HepG2 (cell line): ENCODE measurements at regions of chr2 and their contacts with region 1.

Region 1: GRCh38 chr2:211157856-211158463 is 601.6 kb downstream of the CPS1 start:
- DNase-seq: peak; percentile 67
- ATAC-seq: peak; percentile 99
- H3K4me3 ChIP-seq: no peak overlapping the region
- H3K27ac ChIP-seq: no peak overlapping the region
- H3K4me1 ChIP-seq: no peaks in the 10 kb centered on the region
- H3K27me3 ChIP-seq: no peaks in the 10 kb centered on the region
- CTCF ChIP-seq: peak; percentile 83
- EP300 ChIP-seq: no peak
- POLR2A ChIP-seq: no peak
- RAD21 ChIP-seq: 0 out of 2 replicates have a peak, but pooled peaks have one; percentile 44

Region 2: DNA sequence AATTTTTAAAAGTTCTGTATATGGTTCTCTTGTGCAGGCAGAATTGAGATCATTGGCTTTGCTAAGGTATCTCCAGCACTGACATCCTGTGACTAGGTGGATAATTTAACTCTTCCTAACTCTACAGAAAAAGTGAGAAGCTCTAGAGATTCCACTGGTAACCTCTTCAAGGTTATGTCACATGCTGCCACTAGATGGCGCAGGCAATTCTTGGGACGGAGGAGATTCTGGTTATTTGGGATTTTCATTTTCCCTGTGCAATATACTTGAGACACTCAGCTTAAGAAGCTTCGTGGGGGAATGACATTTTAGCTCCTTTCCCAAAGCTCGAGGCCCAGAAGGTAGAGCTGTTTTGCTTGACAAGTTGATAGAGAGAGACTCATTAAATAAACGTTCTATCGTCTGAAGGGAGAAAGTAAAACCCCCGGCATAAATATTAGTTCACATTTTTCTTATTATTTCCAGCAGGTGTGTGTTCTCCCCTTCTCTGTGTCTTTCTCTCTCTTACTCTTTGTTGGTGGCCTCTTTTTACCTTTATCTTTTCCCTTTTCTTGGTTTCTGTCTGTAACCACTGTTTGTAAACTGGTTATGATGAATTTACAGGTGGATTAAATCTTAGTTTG is 654.8 kb before region 1 on chr2:
- CTCF ChIA-PET with region 1: no interaction called
- POLR2A ChIA-PET with region 1: no interaction called
- in situ Hi-C with region 1: no loop called
- intact Hi-C with region 1: loop called (anchors 5 kb)
- DNase-seq: peak; percentile 47
- ATAC-seq: peak; percentile 92
- H3K4me3 ChIP-seq: no peak overlapping the region
- H3K27ac ChIP-seq: no peak overlapping the region
- H3K4me1 ChIP-seq: peaks cover 21% of the 10 kb centered on the region
- H3K27me3 ChIP-seq: no peaks in the 10 kb centered on the region
- CTCF ChIP-seq: peak; percentile 90
- EP300 ChIP-seq: no peak
- POLR2A ChIP-seq: no peak
- RAD21 ChIP-seq: peak; percentile 71

Region 3: GRCh38 chr2:210617732-210618330 is 540.1 kb before region 1 on chr2:
- CTCF ChIA-PET with region 1: interaction called, 7 read pairs
- POLR2A ChIA-PET with region 1: no interaction called
- in situ Hi-C with region 1: no loop called
- intact Hi-C with region 1: loop called (anchors 1 kb)
- DNase-seq: peak; percentile 64
- ATAC-seq: peak; percentile 96
- H3K4me3 ChIP-seq: no peak overlapping the region
- H3K27ac ChIP-seq: no peak overlapping the region
- H3K4me1 ChIP-seq: peaks cover 8% of the 10 kb centered on the region; the same call in 1 of the 2 replicates
- H3K27me3 ChIP-seq: no peaks in the 10 kb centered on the region
- CTCF ChIP-seq: peak; percentile 84
- EP300 ChIP-seq: no peak
- POLR2A ChIP-seq: no peak
- RAD21 ChIP-seq: peak; percentile 70

Region 4: GRCh38 chr2:210895132-210895531 is 262.8 kb before region 1 on chr2:
- CTCF ChIA-PET with region 1: no interaction called
- POLR2A ChIA-PET with region 1: no interaction called
- in situ Hi-C with region 1: no loop called
- intact Hi-C with region 1: loop called (anchors 2 kb)
- DNase-seq: peak; percentile 54
- ATAC-seq: peak; percentile 100
- H3K4me3 ChIP-seq: no peak overlapping the region
- H3K27ac ChIP-seq: no peak overlapping the region
- H3K4me1 ChIP-seq: peaks cover 14% of the 10 kb centered on the region; the same call in 1 of the 2 replicates
- H3K27me3 ChIP-seq: no peaks in the 10 kb centered on the region; a peak in 1 of 5 replicates
- CTCF ChIP-seq: peak; percentile 79
- EP300 ChIP-seq: no peak
- POLR2A ChIP-seq: no peak
- RAD21 ChIP-seq: peak; percentile 31; the same call in 1 of the 2 replicates

Region 5: DNA sequence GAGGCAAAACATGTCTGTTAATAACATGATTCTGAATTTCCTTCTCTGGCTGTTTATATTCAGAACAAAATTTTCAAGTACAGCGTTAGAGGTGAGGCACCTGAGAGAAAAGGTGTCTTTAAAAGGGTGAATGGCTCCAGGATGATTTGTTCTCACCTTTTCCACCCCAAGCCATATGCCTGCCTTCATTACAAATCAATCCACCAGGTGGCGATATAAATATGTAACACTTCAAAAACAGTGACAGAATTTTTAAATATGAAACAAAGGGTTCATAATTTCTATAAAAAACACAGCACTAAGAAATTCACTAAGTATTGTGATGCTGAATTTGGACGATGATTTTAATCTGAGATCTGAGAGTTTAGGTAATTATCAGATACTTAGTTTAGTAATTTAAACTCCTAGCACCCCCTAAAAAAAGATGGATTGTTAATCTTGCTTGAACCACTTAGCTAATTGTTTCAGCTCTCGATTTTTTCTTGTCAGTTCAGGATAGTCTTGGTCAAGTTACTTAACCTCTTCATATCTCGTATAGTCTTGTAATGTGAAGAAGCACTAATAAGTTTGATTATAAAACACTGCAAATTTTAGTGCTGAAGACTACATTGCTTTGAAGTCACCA is 72.8 kb before region 1 on chr2:
- CTCF ChIA-PET with region 1: interaction called, 8 read pairs
- POLR2A ChIA-PET with region 1: no interaction called
- in situ Hi-C with region 1: no loop called
- intact Hi-C with region 1: loop called (anchors 1 kb)
- DNase-seq: peak; percentile 49
- ATAC-seq: peak; percentile 69
- H3K4me3 ChIP-seq: no peak overlapping the region
- H3K27ac ChIP-seq: no peak overlapping the region
- H3K4me1 ChIP-seq: no peaks in the 10 kb centered on the region
- H3K27me3 ChIP-seq: no peaks in the 10 kb centered on the region
- CTCF ChIP-seq: peak; percentile 57
- EP300 ChIP-seq: no peak
- POLR2A ChIP-seq: no peak
- RAD21 ChIP-seq: no peak